ENCODE measurements at regions of chr14 and their contacts with region 1.

Region 1: GRCh38 chr14:39015360-39015961 is 87.6 kb downstream of the SEC23A start:
- DNase-seq: peak in 4 of 10 donors; percentile 24 to 51 (median 41)

Region 2: GRCh38 chr14:37985826-37986470 is 1029.5 kb before region 1 on chr14:
- intact Hi-C with region 1: loop called (anchors 10 kb)
- DNase-seq: peak in 6 of 10 donors; percentile 15 to 58 (median 31)

Region 3: DNA sequence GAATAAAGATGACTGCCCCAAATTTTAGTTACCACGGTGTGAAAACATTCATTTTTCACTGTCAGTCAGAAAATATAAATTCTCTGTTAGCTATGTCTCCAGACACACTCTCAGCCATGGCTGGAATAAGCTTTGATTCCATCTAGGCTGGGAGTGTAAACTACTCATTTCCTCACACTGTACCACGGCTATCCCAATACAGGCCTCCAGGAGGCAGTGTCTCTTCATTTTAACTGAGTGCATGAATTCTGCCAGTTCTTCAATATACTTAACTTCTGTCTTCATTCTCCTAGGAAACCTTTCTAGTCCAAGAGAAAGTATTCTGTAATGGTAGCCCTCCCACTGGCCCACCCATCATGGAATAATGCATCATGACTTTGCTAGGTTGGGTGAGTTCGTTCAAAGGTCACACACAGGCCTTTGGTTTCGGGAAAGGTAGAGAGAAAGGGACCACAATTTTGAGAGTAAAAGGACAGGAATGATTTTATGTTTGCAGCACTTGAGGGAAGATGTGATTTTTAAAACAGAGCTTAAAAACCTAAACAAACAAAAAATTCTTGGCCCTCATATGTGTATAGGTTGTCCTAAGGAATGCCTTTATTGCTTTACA is 293.5 kb before region 1 on chr14:
- intact Hi-C with region 1: loop called (anchors 1 kb)
- DNase-seq: peak in 7 of 10 donors; percentile 19 to 85 (median 71)

Region 4: DNA sequence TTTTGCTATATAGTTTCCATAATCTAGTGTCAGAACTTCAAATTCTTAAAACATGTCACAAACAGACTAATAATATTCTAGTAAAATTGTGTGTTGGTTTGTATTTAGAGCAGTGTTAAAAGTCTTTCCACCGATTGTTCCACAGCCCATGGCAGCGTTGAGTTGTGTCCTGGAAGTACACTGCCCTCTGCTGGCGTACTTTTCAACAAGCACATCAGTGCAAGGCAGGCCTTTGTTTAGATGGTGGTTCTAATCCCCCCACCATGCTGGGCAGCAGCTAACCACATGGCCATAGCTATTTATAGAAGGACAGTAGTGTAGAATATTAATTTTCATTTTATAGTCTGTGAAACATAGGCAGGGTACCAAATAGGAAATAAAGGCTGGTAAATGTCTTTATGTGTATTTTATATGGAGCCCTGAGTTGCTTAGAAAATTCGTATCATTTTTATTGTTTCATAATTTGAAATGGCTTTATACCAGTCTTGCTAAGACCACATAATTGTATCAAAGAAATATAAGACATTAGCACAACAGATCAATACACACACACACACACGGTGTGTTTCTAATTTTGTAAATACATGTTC is 147.8 kb before region 1 on chr14:
- intact Hi-C with region 1: loop called (anchors 2 kb)
- DNase-seq: peak; percentile 49 to 95 (median 84)

Region 5: GRCh38 chr14:38948171-38948570 is 67.3 kb before region 1 on chr14:
- intact Hi-C with region 1: loop called (anchors 10 kb)
- DNase-seq: no peak